HepG2 (cell line): ENCODE measurements at regions of chr2 and their contacts with region 1.

Region 1: GRCh38 chr2:199955339-199956261 is at the starts of genes MAIP1 and TYW5:
- DNase-seq: peak; percentile 81
- ATAC-seq: peak; percentile 93
- H3K4me3 ChIP-seq: peak within 1 kb of the TSS; percentile 86 to 96 (median 94)
- H3K27ac ChIP-seq: peak within 1 kb of the TSS; percentile 91
- H3K4me1 ChIP-seq: peaks cover 50% of the 10 kb centered on the region
- H3K27me3 ChIP-seq: no peaks in the 10 kb centered on the region; a peak in 1 of 5 replicates
- CTCF ChIP-seq: peak; percentile 66
- EP300 ChIP-seq: 0 out of 4 replicates have a peak, but pooled peaks of 1 of the 2 experiments have one; percentile 11
- POLR2A ChIP-seq: peak; percentile 95 to 96
- RAD21 ChIP-seq: peak; percentile 54
- total RNA-seq, gene MAIP1: 72.9 and 90.9 TPM in 2 replicates
- total RNA-seq, gene TYW5: 14.6 and 14.8 TPM in 2 replicates

Region 2: GRCh38 chr2:199911052-199911876 is 44.3 kb before region 1 on chr2 and contains the start of gene C2orf69:
- CTCF ChIA-PET with region 1: no interaction called
- POLR2A ChIA-PET with region 1: no interaction called
- in situ Hi-C with region 1: no loop called
- intact Hi-C with region 1: loop called (anchors 2 kb)
- DNase-seq: peak; percentile 99
- ATAC-seq: peak; percentile 93
- H3K4me3 ChIP-seq: peak within 1 kb of the TSS; percentile 74 to 99 (median 82)
- H3K27ac ChIP-seq: peak within 1 kb of the TSS; percentile 95
- H3K4me1 ChIP-seq: peaks cover 30% of the 10 kb centered on the region
- H3K27me3 ChIP-seq: no peaks in the 10 kb centered on the region; a peak in 1 of 5 replicates
- CTCF ChIP-seq: peak; percentile 34
- EP300 ChIP-seq: no peak; a peak in 1 of 4 replicates
- POLR2A ChIP-seq: peak; percentile 92 to 93; a peak in 3 of 4 replicates
- RAD21 ChIP-seq: peak; percentile 81
- total RNA-seq, gene C2orf69: 19.3 and 24.2 TPM in 2 replicates

Region 3: GRCh38 chr2:200086911-200087310 is 131.3 kb after region 1 on chr2:
- CTCF ChIA-PET with region 1: no interaction called
- POLR2A ChIA-PET with region 1: no interaction called
- in situ Hi-C with region 1: no loop called
- intact Hi-C with region 1: no loop called
- DNase-seq: no peak
- ATAC-seq: no peak
- H3K4me3 ChIP-seq: no peak overlapping the region
- H3K27ac ChIP-seq: no peak overlapping the region
- H3K4me1 ChIP-seq: peaks cover under 1% of the 10 kb centered on the region
- H3K27me3 ChIP-seq: peaks cover 1 to 41% of the 10 kb centered on the region in 2 experiments; a peak in 4 of 5 replicates
- CTCF ChIP-seq: no peak
- EP300 ChIP-seq: no peak
- POLR2A ChIP-seq: no peak
- RAD21 ChIP-seq: no peak